ENCODE measurements at regions of chr18 and their contacts with region 1.

Region 1: GRCh38 chr18:58529714-58530354 is 99.1 kb downstream of the ALPK2 start:
- ATAC-seq: peak in 4 of 8 experiments; percentile 38 to 87 (median 72)
- H3K4me3 ChIP-seq: no peak overlapping the region
- H3K27ac ChIP-seq: no peak overlapping the region
- H3K4me1 ChIP-seq: peaks cover 4 to 14% of the 10 kb centered on the region in 2 donors

Region 2: DNA sequence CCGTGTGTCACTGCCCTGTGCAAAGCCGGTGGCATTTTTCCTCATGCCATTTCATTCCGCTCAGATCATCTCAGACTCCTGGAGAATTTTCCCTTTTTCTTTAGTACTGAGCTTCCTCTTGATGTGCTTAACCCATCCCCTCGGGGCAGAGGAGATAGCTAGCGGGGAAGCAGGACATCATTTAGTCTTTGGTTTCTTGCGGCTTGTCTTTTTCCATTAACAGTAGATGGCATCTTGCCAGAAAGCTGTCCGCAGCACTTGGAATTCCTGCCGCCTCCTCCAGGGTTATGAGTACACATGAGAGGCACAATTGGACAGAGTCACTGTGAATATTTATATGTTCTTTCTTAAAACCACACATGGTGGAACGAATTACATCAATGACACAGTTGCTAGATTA is 127.6 kb before region 1 on chr18:
- in situ Hi-C with region 1: no loop called
- ATAC-seq: peak in 6 of 8 experiments; percentile 13 to 70 (median 47)
- H3K4me3 ChIP-seq: no peak overlapping the region
- H3K27ac ChIP-seq: no peak overlapping the region
- H3K4me1 ChIP-seq: peaks cover 13 to 14% of the 10 kb centered on the region in 2 donors

Region 3: GRCh38 chr18:58761241-58761969 is 231.6 kb after region 1 on chr18:
- in situ Hi-C with region 1: loop called in 4 of 9 experiments (anchors 5 to 25 kb)
- ATAC-seq: peak in 4 of 8 experiments; percentile 9 to 46 (median 26)
- H3K4me3 ChIP-seq: no peak overlapping the region
- H3K27ac ChIP-seq: no peak overlapping the region
- H3K4me1 ChIP-seq: no peaks in the 10 kb centered on the region

Region 4: GRCh38 chr18:58768293-58768974 is 238.6 kb after region 1 on chr18:
- in situ Hi-C with region 1: loop called in 4 of 9 experiments (anchors 5 to 25 kb)
- ATAC-seq: peak; percentile 95 to 99 (median 97)
- H3K4me3 ChIP-seq: peak overlapping the region; percentile 2 to 30 (median 14)
- H3K27ac ChIP-seq: no peak overlapping the region
- H3K4me1 ChIP-seq: peaks cover 7 to 9% of the 10 kb centered on the region in 2 donors

Region 5: DNA sequence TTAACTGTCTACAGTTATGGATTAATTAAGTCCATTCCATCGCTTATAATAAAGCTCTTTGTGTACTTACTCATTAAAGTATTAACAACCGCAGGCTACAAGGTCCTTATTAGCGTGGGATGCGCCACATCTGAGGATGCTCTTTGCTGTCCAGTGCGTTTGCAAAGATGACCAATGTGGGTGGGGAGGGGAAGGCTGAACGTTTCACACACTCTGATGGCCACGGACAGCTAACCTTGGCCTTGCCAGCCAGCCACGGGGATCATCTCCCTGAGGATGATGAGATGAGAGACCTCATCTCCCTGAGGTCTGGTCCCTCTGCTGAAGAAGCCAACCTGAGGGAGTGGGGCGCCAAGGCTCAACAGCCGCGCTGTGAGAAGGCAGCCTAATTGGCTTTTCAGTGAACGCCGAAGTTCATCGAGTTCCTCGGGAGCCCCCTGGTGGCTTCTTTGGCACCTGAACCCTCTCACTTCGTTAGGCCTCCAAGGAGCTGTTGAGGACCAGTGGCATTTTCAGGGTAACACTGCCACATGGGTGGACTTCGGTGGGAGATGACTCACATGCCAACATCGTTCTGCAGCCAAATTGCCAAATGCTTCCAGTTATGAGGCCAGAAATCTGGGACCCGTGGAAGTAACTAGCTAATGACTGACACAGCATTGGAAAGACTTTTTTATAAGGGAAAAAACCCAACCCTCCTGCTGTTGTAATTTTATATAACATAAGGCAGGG is 540.5 kb after region 1 on chr18:
- in situ Hi-C with region 1: loop called in 3 of 9 experiments (anchors 25 kb)
- ATAC-seq: peak; percentile 90 to 99 (median 95)
- H3K4me3 ChIP-seq: no peak overlapping the region
- H3K27ac ChIP-seq: no peak overlapping the region
- H3K4me1 ChIP-seq: peaks cover 0 to under 1% of the 10 kb centered on the region in 2 donors

Region 6: GRCh38 chr18:59096098-59096789 is 566.4 kb after region 1 on chr18:
- in situ Hi-C with region 1: loop called in 1 of 9 experiments (anchors 25 kb)
- ATAC-seq: peak in 1 of 8 experiments; percentile 61
- H3K4me3 ChIP-seq: no peak overlapping the region
- H3K27ac ChIP-seq: no peak overlapping the region
- H3K4me1 ChIP-seq: no peaks in the 10 kb centered on the region

Measured in motor neuron (in vitro differentiated cells).